MCF 10A (cell line): ENCODE measurements at regions of chr1 and their contacts with region 1.

Region 1: DNA sequence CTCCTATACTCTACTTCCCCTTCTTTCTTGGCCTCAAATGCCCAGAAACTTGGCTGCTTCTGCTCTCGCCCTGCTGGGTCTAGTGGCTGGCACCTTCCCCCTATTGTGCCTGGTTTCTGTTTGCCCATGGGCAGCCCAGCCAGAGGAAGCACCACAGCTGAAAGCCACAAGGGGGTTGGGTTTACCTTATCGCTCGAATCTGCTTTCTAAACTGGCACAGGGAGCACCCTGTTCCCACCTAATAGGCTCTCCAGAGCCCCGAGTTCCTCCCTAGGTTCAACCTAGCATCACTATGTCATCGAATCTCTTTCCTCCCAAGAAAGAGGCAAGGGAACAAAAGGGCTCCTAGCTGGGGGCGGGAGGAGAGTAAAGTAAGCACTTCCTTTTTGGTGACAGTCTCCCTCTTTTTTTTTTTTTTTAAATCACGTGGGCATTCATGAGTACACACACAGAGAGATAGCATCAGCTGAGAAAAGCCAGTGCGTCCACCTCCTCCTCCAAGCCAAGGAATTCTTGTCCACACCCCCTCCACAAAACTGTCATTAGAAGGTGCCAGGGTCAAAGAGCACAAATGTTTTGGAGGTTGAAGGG is 72.8 kb downstream of the PLEKHA6 start:
- DNase-seq: peak; percentile 67
- H3K4me3 Mint-ChIP-seq: peak overlapping the region; percentile 89
- H3K27ac Mint-ChIP-seq: peak overlapping the region; percentile 88
- H3K4me1 Mint-ChIP-seq: peaks cover 74% of the 10 kb centered on the region
- H3K27me3 Mint-ChIP-seq: no peaks in the 10 kb centered on the region
- CTCF ChIP-seq: peak; percentile 14

Region 2: GRCh38 chr1:204130989-204131892 is 155.7 kb before region 1 on chr1:
- CTCF ChIA-PET with region 1: no interaction called
- POLR2A ChIA-PET with region 1: no interaction called
- intact Hi-C with region 1: no loop called
- DNase-seq: peak; percentile 99
- H3K4me3 Mint-ChIP-seq: peak overlapping the region; percentile 27
- H3K27ac Mint-ChIP-seq: peak overlapping the region; percentile 93
- H3K4me1 Mint-ChIP-seq: peaks cover 58% of the 10 kb centered on the region
- H3K27me3 Mint-ChIP-seq: no peaks in the 10 kb centered on the region
- CTCF ChIP-seq: no peak

Region 3: DNA sequence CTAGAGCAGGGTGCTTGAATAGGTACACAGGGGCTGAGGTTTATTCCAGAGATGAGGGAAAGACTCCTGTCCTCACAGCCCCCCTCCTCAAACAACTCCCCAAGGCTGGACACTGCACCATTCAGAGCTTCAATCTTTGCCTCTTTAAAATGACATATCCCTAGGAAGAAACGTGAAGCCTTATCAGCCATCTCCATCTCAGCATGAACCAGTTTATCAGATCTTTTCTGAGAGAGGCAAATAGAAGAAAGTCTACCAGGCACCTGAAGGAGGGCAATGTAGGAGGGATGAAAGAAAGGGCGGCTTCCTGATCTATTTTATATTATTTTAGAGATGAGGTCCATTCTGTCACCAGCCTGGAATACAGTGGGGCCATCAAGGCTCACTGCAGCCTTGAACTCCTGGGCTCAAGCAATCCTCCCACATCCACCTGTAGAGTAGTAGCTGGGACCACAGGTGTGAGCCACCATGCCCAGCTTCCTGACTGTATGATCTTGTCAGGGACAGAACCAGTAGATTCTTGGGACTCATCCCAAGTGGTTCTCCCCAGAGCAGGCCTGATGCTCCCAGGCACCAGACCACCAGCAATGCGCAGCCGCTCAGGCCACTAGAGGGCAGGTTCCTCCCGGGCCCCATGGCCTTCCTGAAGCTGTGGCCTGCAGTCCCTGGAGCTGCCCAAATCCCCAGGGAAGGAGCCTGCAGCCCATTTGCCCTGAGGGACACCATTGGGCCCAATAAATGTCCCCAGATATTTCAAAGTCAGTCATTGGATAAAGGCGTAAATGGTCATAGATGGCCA is 28.8 kb before region 1 on chr1:
- CTCF ChIA-PET with region 1: interaction called, 62 read pairs
- POLR2A ChIA-PET with region 1: interaction called, 11 read pairs
- intact Hi-C with region 1: loop called (anchors 1 kb)
- DNase-seq: peak; percentile 80
- H3K4me3 Mint-ChIP-seq: no peak overlapping the region
- H3K27ac Mint-ChIP-seq: peak overlapping the region; percentile 49
- H3K4me1 Mint-ChIP-seq: peaks cover 13% of the 10 kb centered on the region
- H3K27me3 Mint-ChIP-seq: no peaks in the 10 kb centered on the region
- CTCF ChIP-seq: peak; percentile 97

Region 4: DNA sequence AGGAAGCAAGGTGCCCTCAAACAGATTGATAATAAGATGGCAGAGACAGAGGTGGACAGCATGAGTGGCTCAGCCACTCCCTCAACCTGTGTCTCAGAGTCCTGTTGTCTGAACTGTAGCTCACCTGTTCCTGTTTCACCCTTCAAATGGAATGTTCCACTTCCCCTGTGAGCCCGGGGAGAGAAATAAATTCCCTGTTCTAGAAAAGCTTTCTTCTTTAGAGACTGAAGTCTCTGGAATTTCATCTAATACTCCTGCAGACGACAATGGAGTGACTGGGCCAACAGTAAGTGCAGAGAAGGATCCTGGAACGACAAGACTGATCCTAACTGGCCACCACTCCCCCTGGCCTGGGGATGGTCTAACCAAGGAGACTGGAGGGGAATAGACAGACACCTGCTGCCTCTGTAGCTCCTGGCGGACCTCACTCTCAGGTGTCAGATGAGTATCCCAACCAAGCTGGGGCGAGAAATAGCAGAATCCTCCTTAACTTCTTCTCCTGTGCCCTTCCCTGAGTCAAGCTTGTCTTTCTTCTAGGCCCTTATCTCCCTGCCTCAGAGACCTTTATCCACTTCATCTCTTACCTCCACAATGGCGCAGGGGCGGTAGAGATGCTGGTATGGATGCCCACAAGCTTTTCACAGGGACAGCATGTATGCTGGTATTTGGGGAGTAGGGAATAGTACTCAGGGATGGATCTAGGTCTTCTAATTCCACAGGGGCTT is 27.4 kb after region 1 on chr1:
- CTCF ChIA-PET with region 1: interaction called, 8 read pairs
- POLR2A ChIA-PET with region 1: interaction called, 413 read pairs
- intact Hi-C with region 1: loop called (anchors 1 kb)
- DNase-seq: peak; percentile 83
- H3K4me3 Mint-ChIP-seq: no peak overlapping the region
- H3K27ac Mint-ChIP-seq: peak overlapping the region; percentile 4
- H3K4me1 Mint-ChIP-seq: peaks cover 34% of the 10 kb centered on the region
- H3K27me3 Mint-ChIP-seq: no peaks in the 10 kb centered on the region
- CTCF ChIP-seq: no peak

Region 5: GRCh38 chr1:204341380-204341779 is 54.5 kb after region 1 on chr1:
- CTCF ChIA-PET with region 1: interaction called, 5 read pairs
- POLR2A ChIA-PET with region 1: interaction called, 31 read pairs
- intact Hi-C with region 1: loop called (anchors 5 kb)
- DNase-seq: no peak
- H3K4me3 Mint-ChIP-seq: no peak overlapping the region
- H3K27ac Mint-ChIP-seq: no peak overlapping the region
- H3K4me1 Mint-ChIP-seq: peaks cover 12% of the 10 kb centered on the region
- H3K27me3 Mint-ChIP-seq: no peaks in the 10 kb centered on the region
- CTCF ChIP-seq: no peak

Region 6: DNA sequence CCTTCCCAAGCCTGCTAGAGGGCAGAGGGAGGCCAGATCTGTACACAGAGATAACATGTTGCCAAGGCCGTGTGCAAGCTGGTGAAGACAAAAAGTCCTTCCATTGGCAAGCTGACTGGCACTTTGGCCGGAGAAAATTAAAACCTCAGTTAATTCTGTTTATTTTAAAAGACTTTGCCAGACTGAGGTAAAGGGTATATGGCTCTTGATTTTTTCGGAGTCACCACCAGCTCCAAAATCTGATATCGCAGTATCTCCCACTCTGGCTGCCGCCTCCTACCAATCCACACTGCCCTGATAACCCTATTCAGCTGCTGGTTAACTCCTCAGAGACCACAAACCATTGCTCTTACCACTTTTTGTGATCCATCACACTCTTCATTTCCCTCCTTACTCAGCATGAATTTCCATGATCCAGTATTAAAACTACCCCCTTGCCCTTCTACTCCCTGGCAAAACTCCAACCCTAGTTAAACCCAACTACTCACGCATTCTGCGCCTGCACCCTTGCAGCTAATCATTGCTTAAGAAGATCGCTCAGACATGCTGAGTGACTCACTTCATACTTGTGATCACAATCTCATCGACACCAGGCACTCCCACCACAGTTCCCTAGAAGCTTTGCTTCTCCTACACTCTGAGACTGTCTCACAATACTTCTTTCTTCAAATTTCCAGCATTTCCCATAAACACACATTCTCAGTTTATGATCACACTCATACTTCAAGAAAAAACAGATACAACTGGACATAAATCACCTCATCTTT is 130.5 kb after region 1 on chr1:
- CTCF ChIA-PET with region 1: no interaction called
- POLR2A ChIA-PET with region 1: interaction called, 12 read pairs
- intact Hi-C with region 1: no loop called
- DNase-seq: peak; percentile 100
- H3K4me3 Mint-ChIP-seq: peak overlapping the region; percentile 65
- H3K27ac Mint-ChIP-seq: peak overlapping the region; percentile 91
- H3K4me1 Mint-ChIP-seq: peaks cover 48% of the 10 kb centered on the region
- H3K27me3 Mint-ChIP-seq: no peaks in the 10 kb centered on the region
- CTCF ChIP-seq: no peak

Region 7: DNA sequence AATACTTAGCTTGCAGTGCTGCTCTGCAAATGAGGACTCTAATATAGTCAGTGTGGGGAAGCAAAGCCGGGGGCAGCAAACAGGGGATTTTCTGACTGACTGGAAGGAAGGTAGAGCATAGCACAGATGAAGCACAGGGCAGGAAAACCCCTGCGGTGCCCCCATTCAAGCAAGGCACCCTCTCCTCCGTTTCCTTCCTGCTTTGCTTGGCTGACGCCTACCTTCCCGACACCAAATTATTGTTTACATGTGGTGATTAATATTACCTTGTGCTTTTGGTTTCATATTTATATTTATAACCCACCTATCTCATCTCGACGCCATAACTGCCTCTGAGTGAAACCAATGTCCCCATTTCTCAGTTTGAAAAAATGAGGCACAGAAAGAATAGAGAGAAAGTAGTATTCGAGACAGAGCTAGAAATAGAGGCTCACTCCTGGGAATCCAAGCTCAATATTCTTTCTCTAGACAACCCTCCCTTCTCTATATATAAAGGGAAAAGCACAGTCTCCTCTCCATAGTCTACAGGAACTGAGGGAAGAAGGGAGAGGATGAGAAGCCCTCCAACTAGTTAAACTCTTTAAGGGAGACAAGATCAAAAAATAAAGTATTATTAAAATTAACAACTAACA is 166.3 kb after region 1 on chr1:
- CTCF ChIA-PET with region 1: no interaction called
- POLR2A ChIA-PET with region 1: no interaction called
- intact Hi-C with region 1: no loop called
- DNase-seq: no peak
- H3K4me3 Mint-ChIP-seq: no peak overlapping the region
- H3K27ac Mint-ChIP-seq: no peak overlapping the region
- H3K4me1 Mint-ChIP-seq: peaks cover 21% of the 10 kb centered on the region
- H3K27me3 Mint-ChIP-seq: no peaks in the 10 kb centered on the region
- CTCF ChIP-seq: no peak